ENCODE measurements at regions of chr2 and their contacts with region 1.

Region 1: GRCh38 chr2:237966565-237967462 is at the start of gene UBE2F:
- DNase-seq: peak; percentile 95 to 96
- H3K4me3 ChIP-seq: peak within 1 kb of the TSS; percentile 87
- H3K4me3 Mint-ChIP-seq: peak within 1 kb of the TSS; percentile 88
- H3K27ac Mint-ChIP-seq: peak within 1 kb of the TSS; percentile 79
- H3K4me1 ChIP-seq: no peaks in the 10 kb centered on the region
- H3K4me1 Mint-ChIP-seq: peaks cover 9% of the 10 kb centered on the region
- H3K27me3 ChIP-seq: no peaks in the 10 kb centered on the region
- H3K27me3 Mint-ChIP-seq: no peaks in the 10 kb centered on the region
- CTCF ChIP-seq: no peak
- total RNA-seq, gene UBE2F: 33.9 and 38.9 TPM in 2 replicates

Region 2: GRCh38 chr2:237744613-237745249 is 222.1 kb before region 1 on chr2:
- CTCF ChIA-PET with region 1: no interaction called
- POLR2A ChIA-PET with region 1: no interaction called
- intact Hi-C with region 1: no loop called
- DNase-seq: peak; percentile 60 to 81
- H3K4me3 ChIP-seq: no peak overlapping the region
- H3K4me3 Mint-ChIP-seq: no peak overlapping the region
- H3K27ac Mint-ChIP-seq: no peak overlapping the region
- H3K4me1 ChIP-seq: peaks cover 27% of the 10 kb centered on the region
- H3K4me1 Mint-ChIP-seq: peaks cover 25% of the 10 kb centered on the region
- H3K27me3 ChIP-seq: no peaks in the 10 kb centered on the region
- H3K27me3 Mint-ChIP-seq: no peaks in the 10 kb centered on the region
- CTCF ChIP-seq: peak; percentile 77 to 92

Region 3: DNA sequence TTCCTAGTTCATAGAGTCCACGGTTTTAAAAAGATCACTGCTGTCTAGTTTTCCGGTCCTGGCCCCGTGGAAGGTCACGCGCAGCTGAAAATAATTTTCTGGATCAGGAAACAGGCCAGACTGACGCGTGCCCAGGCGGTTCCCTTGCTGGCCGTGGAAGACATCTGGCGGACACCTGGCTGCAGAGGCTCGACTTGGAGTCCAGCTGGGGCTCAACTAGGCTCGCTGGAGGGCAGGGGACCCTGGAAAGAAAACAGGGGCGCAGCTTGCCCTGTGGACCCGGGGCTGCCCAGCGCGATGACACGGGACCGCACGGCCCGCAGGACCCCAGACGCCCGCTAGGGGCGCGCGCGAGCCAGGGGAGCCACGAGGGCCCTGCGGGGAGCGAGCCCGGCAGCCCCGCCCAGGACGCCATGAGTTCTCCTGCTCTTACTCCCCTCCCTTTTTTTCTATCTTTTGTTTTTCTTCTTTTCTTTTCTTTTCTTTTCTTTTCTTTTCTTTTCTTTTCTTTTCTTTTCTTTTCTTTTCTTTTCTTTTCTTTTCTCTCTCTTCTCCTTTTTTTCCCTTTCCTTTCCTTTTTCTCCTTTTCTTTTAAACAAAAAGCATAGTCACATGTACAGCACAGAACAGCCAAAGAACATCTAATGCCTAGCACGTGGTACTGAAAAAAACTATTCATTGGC is 43.2 kb before region 1 on chr2:
- CTCF ChIA-PET with region 1: no interaction called
- POLR2A ChIA-PET with region 1: no interaction called
- intact Hi-C with region 1: loop called (anchors 1 kb)
- DNase-seq: peak; percentile 49 to 84
- H3K4me3 ChIP-seq: peak overlapping the region; percentile 16
- H3K4me3 Mint-ChIP-seq: peak overlapping the region; percentile 23
- H3K27ac Mint-ChIP-seq: no peak overlapping the region
- H3K4me1 ChIP-seq: no peaks in the 10 kb centered on the region
- H3K4me1 Mint-ChIP-seq: peaks cover 7% of the 10 kb centered on the region
- H3K27me3 ChIP-seq: no peaks in the 10 kb centered on the region
- H3K27me3 Mint-ChIP-seq: no peaks in the 10 kb centered on the region
- CTCF ChIP-seq: peak; percentile 67 to 86

Measured in Caco-2 (cell line).